ENCODE measurements at regions of chr11 and their contacts with region 1.

Region 1: GRCh38 chr11:124673333-124674167 is at the starts of genes SIAE and SPA17:
- DNase-seq: peak; percentile 93
- ATAC-seq: peak; percentile 95
- H3K4me3 Mint-ChIP-seq: peak within 1 kb of the TSS; percentile 84
- H3K27ac Mint-ChIP-seq: peak within 1 kb of the TSS; percentile 89
- H3K4me1 Mint-ChIP-seq: peaks cover 37% of the 10 kb centered on the region
- H3K27me3 Mint-ChIP-seq: no peaks in the 10 kb centered on the region
- total RNA-seq, gene SIAE: 3.8 to 4.1 TPM
- total RNA-seq, gene SPA17: 2.4 to 2.9 TPM

Region 2: GRCh38 chr11:124384399-124384798 is 289.2 kb before region 1 on chr11 and contains the start of gene OR8B2:
- CTCF ChIA-PET with region 1: no interaction called
- DNase-seq: no peak
- ATAC-seq: no peak
- H3K4me3 Mint-ChIP-seq: no peak within 1 kb of the TSS
- H3K27ac Mint-ChIP-seq: no peak within 1 kb of the TSS
- H3K4me1 Mint-ChIP-seq: no peaks in the 10 kb centered on the region
- H3K27me3 Mint-ChIP-seq: no peaks in the 10 kb centered on the region
- total RNA-seq, gene OR8B2: not detected

Region 3: GRCh38 chr11:124739479-124740276 is 66.1 kb after region 1 on chr11 and contains the start of gene NRGN:
- CTCF ChIA-PET with region 1: interaction called, 69 read pairs
- DNase-seq: peak; percentile 90
- ATAC-seq: peak; percentile 98
- H3K4me3 Mint-ChIP-seq: peak within 1 kb of the TSS; percentile 74
- H3K27ac Mint-ChIP-seq: no peak within 1 kb of the TSS
- H3K4me1 Mint-ChIP-seq: peaks cover 15% of the 10 kb centered on the region
- H3K27me3 Mint-ChIP-seq: peaks cover 67% of the 10 kb centered on the region
- total RNA-seq, gene NRGN: 6.6 TPM

Region 4: DNA sequence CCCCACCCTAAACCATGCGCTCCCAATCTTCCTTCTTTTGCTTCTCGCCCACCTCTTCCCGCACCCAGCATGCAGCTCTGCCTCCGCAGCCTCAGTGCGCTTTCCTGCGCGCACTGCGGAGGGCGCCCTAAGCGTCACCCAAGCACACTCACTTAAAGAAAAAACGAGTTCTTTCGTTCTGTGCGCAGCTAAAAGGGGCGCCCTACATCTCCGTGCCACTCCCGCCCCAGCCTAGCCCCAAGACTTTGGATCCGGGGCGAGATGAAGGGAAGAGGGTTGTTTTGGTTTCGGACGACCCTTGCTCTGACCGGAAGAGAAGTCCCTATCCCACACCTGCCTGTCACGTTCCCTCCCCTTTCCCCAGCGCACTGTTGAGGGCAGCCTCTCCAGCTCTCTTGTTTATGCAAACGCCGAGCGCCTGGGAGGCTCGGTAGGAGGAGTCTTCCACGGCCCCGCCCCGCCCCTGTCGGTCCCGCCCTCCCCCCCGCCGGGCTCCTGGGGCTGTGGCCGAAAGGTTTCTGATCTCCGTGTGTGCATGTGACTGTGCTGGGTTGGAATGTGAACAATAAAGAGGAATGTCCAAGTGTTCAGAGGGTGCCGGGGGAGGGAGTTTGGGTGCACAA is 73.2 kb after region 1 on chr11:
- CTCF ChIA-PET with region 1: interaction called, 69 read pairs
- DNase-seq: peak; percentile 85
- ATAC-seq: peak; percentile 92
- H3K4me3 Mint-ChIP-seq: peak overlapping the region; percentile 89
- H3K27ac Mint-ChIP-seq: peak overlapping the region; percentile 89
- H3K4me1 Mint-ChIP-seq: peaks cover 14% of the 10 kb centered on the region
- H3K27me3 Mint-ChIP-seq: peaks cover 26% of the 10 kb centered on the region

Region 5: GRCh38 chr11:124758317-124759203 is 85.0 kb after region 1 on chr11:
- CTCF ChIA-PET with region 1: interaction called, 49 read pairs
- DNase-seq: peak; percentile 82
- ATAC-seq: peak; percentile 64
- H3K4me3 Mint-ChIP-seq: no peak overlapping the region
- H3K27ac Mint-ChIP-seq: no peak overlapping the region
- H3K4me1 Mint-ChIP-seq: peaks cover 19% of the 10 kb centered on the region
- H3K27me3 Mint-ChIP-seq: peaks cover 53% of the 10 kb centered on the region

Region 6: DNA sequence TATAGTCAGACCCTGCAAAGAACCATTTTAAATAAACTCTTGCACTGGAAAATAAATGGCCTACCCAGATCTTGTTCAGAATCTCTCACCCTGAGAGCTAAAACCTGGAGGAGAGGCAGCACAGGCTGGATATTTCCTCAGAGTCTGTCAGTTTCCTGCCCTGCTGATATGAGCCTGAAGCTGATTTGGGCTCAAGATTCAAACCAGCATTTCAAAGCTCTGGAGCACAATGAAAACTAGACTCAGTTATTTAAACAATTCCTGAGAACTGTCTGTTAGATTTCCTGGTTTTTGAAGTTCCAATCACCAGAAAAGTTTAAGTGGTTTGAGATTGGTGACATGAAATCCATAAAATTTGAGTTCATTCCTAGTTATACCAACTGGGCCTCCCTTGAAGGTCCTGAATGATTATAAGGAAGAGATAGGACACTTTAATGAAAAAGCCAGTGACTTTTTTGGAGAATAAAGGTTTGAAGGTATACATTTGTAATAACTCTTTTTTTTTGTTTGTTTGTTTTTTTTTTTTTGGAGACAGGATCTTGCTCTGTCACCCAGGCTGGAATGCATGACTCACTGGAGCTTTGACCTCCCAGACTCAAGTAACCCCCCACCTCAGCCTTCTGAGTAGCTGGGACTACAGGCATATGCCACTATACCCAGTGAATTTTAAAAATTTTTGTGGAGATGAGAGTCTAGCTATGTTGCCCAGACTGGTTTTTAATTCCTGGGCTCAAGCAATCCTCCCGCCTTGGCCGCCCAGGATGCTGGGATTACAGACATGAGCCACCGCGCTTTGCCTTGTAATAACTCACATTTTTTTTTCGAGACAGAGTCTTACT is 96.5 kb after region 1 on chr11:
- CTCF ChIA-PET with region 1: interaction called, 12 read pairs
- DNase-seq: no peak
- ATAC-seq: no peak
- H3K4me3 Mint-ChIP-seq: no peak overlapping the region
- H3K27ac Mint-ChIP-seq: no peak overlapping the region
- H3K4me1 Mint-ChIP-seq: no peaks in the 10 kb centered on the region
- H3K27me3 Mint-ChIP-seq: no peaks in the 10 kb centered on the region

Region 7: GRCh38 chr11:124793466-124794278 is 120.1 kb after region 1 on chr11:
- CTCF ChIA-PET with region 1: interaction called, 42 read pairs
- DNase-seq: no peak
- ATAC-seq: peak; percentile 57
- H3K4me3 Mint-ChIP-seq: no peak overlapping the region
- H3K27ac Mint-ChIP-seq: no peak overlapping the region
- H3K4me1 Mint-ChIP-seq: peaks cover 36% of the 10 kb centered on the region
- H3K27me3 Mint-ChIP-seq: no peaks in the 10 kb centered on the region

Region 8: DNA sequence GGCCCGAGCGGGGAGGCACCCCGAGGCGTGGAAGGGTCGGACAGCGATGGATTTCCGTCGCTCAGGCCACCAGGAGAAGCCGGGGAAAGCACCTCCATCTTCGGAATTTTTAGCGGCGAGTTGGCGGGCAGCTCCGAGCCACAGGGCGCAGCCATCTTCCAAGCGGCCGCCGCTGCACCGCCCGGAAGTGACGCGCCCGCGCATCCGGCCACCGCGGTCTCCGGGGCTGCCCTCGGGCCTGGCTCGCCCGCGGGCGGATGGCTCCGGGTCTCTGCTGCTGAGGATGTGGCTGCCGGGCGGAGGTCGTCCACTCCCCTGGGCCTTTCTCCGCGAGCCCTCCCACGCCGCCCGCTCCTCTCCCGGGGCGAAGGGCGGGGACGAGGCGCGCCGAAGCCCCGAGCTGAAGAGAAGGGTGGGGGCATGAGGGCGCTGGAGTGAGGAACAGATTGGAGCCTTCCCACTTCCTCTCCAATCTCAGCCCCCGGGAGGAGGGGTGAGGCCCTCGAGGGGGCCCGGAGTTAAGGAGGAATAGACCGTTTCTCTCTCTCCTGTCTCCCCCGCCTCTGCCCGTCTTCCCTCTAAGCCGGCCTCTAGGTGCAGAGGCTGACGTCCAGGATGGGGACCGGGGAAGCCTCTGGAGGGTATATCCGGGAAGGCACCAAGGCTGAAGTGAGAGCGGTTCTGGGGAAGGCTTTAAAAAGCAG is 126.8 kb after region 1 on chr11 and contains the start of gene MSANTD2:
- CTCF ChIA-PET with region 1: interaction called, 42 read pairs
- DNase-seq: peak; percentile 86
- ATAC-seq: peak; percentile 91
- H3K4me3 Mint-ChIP-seq: peak within 1 kb of the TSS; percentile 82
- H3K27ac Mint-ChIP-seq: peak within 1 kb of the TSS; percentile 90
- H3K4me1 Mint-ChIP-seq: peaks cover 25% of the 10 kb centered on the region
- H3K27me3 Mint-ChIP-seq: peaks cover 2% of the 10 kb centered on the region
- total RNA-seq, gene MSANTD2: 8.5 to 10.2 TPM